GM12878 (cell line): ENCODE measurements at regions of chr6 and their contacts with region 1.

Region 1: GRCh38 chr6:137707590-137708360 is 159.3 kb upstream of the TNFAIP3 start:
- DNase-seq: peak; percentile 97
- ATAC-seq: peak; percentile 75
- H3K4me3 ChIP-seq: peak overlapping the region; percentile 49; the same call in 1 of the 2 replicates
- H3K27ac ChIP-seq: peak overlapping the region; percentile 64
- H3K4me1 ChIP-seq: peaks cover 39% of the 10 kb centered on the region
- H3K27me3 ChIP-seq: no peaks in the 10 kb centered on the region
- CTCF ChIP-seq: peak; percentile 67 to 88 (median 83); a peak in 5 of 6 replicates
- EP300 ChIP-seq: peak; percentile 33 to 57; a peak in 2 of 4 replicates
- POLR2A ChIP-seq: no peak
- RAD21 ChIP-seq: peak; percentile 91

Region 2: DNA sequence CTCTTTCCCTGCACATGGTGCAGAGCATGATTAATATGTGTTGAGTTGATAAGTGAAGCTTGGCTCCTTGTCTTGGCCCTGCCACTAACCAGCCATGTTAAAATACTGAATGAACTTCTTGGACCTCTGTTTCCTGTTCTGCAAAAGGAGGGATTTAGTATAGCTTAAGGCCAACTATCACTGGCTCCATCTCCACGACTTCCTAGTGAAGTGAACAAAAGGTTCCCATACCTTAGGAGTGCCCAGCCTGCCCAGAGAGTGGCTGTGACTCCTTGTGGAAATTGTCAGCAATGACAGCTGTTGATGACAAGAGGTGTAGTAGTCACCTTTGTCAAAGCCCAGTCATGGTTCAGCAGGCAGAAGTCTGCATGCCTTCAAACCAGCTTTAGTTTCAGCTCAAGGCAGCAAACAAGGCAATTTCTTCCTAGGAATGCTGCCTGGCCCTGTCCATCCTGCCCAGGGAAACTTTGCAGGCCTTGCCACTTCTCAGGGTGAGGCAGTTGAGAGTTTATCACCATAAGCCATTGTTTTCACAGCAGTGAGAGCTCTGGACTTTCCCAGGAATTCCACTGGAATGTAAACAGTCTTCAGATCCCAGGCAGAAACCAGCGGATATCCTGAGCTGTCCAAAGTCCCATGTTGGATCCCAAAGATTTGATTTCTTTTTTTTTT is 10.4 kb before region 1 on chr6:
- CTCF ChIA-PET with region 1: interaction called, 12 read pairs
- POLR2A ChIA-PET with region 1: no interaction called
- RAD21 ChIA-PET with region 1: interaction called, 7 read pairs
- SMC1A ChIA-PET with region 1: interaction called, 9 read pairs
- in situ Hi-C with region 1: no loop called
- intact Hi-C with region 1: no loop called
- DNase-seq: no peak
- ATAC-seq: peak; percentile 80
- H3K4me3 ChIP-seq: no peak overlapping the region
- H3K27ac ChIP-seq: no peak overlapping the region
- H3K4me1 ChIP-seq: peaks cover 13% of the 10 kb centered on the region
- H3K27me3 ChIP-seq: no peaks in the 10 kb centered on the region
- CTCF ChIP-seq: peak; percentile 14 to 35 (median 27); a peak in 5 of 6 replicates
- EP300 ChIP-seq: no peak
- POLR2A ChIP-seq: no peak
- RAD21 ChIP-seq: peak; percentile 58

Region 3: GRCh38 chr6:137761103-137761886 is 53.5 kb after region 1 on chr6:
- CTCF ChIA-PET with region 1: interaction called, 4 read pairs
- POLR2A ChIA-PET with region 1: interaction called, 3 read pairs
- RAD21 ChIA-PET with region 1: interaction called, 3 read pairs
- SMC1A ChIA-PET with region 1: interaction called, 10 read pairs
- in situ Hi-C with region 1: no loop called
- intact Hi-C with region 1: no loop called
- DNase-seq: no peak
- ATAC-seq: no peak
- H3K4me3 ChIP-seq: no peak overlapping the region
- H3K27ac ChIP-seq: no peak overlapping the region
- H3K4me1 ChIP-seq: peaks cover 10% of the 10 kb centered on the region
- H3K27me3 ChIP-seq: no peaks in the 10 kb centered on the region
- CTCF ChIP-seq: no peak
- EP300 ChIP-seq: no peak
- POLR2A ChIP-seq: no peak
- RAD21 ChIP-seq: no peak

Region 4: DNA sequence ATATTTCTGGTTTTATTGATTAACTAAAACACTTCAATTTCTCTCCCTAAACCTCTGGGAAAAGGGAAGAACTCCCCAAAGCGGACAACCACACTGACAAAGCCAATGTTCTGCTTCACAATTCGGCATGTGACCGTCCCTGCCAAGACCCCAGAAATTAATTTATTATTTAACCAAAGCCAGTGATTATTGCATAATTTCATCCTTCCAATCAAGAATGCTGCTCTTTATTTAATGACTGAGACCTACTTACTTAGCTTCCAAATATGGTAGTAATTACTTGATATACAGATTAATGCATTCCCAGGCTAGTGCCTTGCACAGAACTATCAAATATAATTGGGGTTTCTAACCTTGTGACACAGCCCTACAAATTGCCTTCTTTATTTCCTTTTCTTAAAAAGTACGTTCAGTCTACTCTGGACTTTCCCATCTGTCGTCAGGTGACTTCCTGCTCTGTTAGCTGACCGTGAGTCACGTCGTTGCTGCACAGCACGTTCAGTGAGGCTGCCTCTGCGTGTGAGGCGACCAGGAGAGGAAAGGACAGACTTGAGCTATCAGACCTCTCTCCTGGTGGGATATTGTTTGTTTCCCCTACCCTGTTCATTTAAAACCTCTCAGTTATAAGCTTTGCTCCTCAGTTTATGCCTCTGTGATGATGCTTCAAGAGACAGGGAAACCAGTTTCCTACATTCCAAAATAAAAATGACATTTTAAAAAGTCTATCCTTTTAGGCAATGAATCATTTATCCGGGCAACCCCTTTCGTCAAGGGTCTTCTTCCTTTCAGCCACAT is 103.5 kb after region 1 on chr6:
- CTCF ChIA-PET with region 1: interaction called, 7 read pairs
- POLR2A ChIA-PET with region 1: interaction called, 4 read pairs
- RAD21 ChIA-PET with region 1: interaction called, 14 read pairs
- SMC1A ChIA-PET with region 1: interaction called, 15 read pairs
- in situ Hi-C with region 1: no loop called
- intact Hi-C with region 1: no loop called
- DNase-seq: peak; percentile 95
- ATAC-seq: peak; percentile 95
- H3K4me3 ChIP-seq: peak overlapping the region; percentile 20
- H3K27ac ChIP-seq: peak overlapping the region; percentile 89
- H3K4me1 ChIP-seq: peaks cover 31% of the 10 kb centered on the region
- H3K27me3 ChIP-seq: no peaks in the 10 kb centered on the region
- CTCF ChIP-seq: no peak
- EP300 ChIP-seq: peak in 1 of 2 experiments; percentile 72; a peak in 2 of 4 replicates
- POLR2A ChIP-seq: peak; percentile 88
- RAD21 ChIP-seq: no peak

Region 5: DNA sequence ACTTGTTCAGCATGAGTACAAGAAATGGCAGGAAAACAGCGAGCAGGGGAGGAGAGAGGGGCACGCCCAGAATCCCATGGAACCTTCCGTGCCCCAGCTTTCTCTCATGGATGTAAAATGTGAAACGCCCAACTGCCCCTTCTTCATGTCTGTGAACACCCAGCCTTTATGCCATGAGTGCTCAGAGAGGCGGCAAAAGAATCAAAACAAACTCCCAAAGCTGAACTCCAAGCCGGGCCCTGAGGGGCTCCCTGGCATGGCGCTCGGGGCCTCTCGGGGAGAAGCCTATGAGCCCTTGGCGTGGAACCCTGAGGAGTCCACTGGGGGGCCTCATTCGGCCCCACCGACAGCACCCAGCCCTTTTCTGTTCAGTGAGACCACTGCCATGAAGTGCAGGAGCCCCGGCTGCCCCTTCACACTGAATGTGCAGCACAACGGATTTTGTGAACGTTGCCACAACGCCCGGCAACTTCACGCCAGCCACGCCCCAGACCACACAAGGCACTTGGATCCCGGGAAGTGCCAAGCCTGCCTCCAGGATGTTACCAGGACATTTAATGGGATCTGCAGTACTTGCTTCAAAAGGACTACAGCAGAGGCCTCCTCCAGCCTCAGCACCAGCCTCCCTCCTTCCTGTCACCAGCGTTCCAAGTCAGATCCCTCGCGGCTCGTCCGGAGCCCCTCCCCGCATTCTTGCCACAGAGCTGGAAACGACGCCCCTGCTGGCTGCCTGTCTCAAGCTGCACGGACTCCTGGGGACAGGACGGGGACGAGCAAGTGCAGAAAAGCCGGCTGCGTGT is 170.9 kb after region 1 on chr6:
- CTCF ChIA-PET with region 1: interaction called, 55 read pairs
- POLR2A ChIA-PET with region 1: interaction called, 3 read pairs
- RAD21 ChIA-PET with region 1: interaction called, 38 read pairs
- SMC1A ChIA-PET with region 1: interaction called, 117 read pairs
- in situ Hi-C with region 1: no loop called
- intact Hi-C with region 1: no loop called
- DNase-seq: no peak
- ATAC-seq: peak; percentile 4; the same call in 2 of the 3 replicates
- H3K4me3 ChIP-seq: peak overlapping the region; percentile 56; the same call in 1 of the 2 replicates
- H3K27ac ChIP-seq: peak overlapping the region; percentile 9; the same call in 1 of the 2 replicates
- H3K4me1 ChIP-seq: peaks cover 10% of the 10 kb centered on the region; the same call in 1 of the 2 replicates
- H3K27me3 ChIP-seq: no peaks in the 10 kb centered on the region
- CTCF ChIP-seq: no peak; a peak in 2 of 6 replicates
- EP300 ChIP-seq: no peak
- POLR2A ChIP-seq: peak; percentile 53; the same call in 1 of the 2 replicates
- RAD21 ChIP-seq: no peak

Region 6: DNA sequence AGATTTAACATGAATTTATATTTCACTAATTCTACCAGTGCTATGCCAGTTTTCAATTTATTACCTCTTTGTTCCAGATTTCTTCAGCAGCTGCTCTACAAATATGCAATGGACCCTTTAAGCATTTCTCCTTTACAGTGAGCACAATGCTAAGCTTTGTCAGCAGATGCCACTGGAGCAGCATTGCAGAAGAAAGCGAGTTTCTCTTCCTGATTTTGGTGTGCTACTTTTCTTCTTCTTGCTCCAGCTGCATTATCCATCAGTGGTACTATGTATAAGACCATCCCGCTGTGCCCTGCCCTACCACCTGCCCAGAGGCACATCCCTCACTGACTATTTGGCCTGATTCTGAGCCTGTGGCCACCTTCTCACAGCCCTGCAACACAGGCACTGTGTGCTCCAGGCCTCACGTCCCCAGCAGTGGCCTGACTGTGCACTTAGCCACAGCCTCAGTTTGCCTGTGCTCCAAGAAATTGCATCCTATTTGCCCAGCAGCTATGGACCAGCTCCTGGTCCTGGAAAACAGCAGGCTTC is 243.4 kb after region 1 on chr6:
- CTCF ChIA-PET with region 1: interaction called, 174 read pairs
- POLR2A ChIA-PET with region 1: no interaction called
- RAD21 ChIA-PET with region 1: interaction called, 127 read pairs
- SMC1A ChIA-PET with region 1: interaction called, 84 read pairs
- in situ Hi-C with region 1: no loop called
- intact Hi-C with region 1: no loop called
- DNase-seq: no peak
- ATAC-seq: peak; percentile 82
- H3K4me3 ChIP-seq: no peak overlapping the region
- H3K27ac ChIP-seq: no peak overlapping the region
- H3K4me1 ChIP-seq: peaks cover 27% of the 10 kb centered on the region
- H3K27me3 ChIP-seq: no peaks in the 10 kb centered on the region
- CTCF ChIP-seq: peak in 2 of 3 experiments; percentile 59 to 62; a peak in 4 of 6 replicates
- EP300 ChIP-seq: peak in 1 of 2 experiments; percentile 19; a peak in 1 of 4 replicates
- POLR2A ChIP-seq: no peak
- RAD21 ChIP-seq: peak; percentile 89

Region 7: DNA sequence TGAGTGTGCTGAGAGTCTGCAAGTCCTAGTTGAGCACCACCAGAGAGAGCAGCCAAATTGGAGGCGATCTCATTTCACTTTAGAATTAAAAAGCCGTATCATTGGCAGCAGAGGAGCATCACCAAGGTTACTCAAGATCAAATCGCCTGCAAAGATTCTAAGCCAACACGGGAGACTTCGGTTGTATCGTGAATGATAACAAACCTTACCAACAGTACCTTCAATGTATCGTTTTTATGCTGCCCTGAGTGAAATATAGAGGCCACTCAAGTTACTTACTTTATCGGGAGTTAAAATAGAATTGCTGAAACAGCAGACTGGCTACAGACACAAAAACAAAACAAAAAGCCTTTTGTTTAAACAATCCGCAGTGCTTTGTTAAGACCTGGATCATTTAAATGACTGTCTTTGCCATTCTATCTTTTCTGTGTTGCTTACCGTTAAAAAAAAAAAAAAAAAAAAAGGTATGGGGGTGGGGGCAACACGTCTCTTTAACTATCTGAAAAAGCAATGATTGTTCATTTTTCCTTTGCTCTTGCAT is 777.3 kb after region 1 on chr6:
- CTCF ChIA-PET with region 1: no interaction called
- POLR2A ChIA-PET with region 1: no interaction called
- RAD21 ChIA-PET with region 1: no interaction called
- SMC1A ChIA-PET with region 1: no interaction called
- in situ Hi-C with region 1: no loop called
- intact Hi-C with region 1: no loop called
- DNase-seq: no peak
- ATAC-seq: no peak
- H3K4me3 ChIP-seq: no peak overlapping the region
- H3K27ac ChIP-seq: no peak overlapping the region
- H3K4me1 ChIP-seq: no peaks in the 10 kb centered on the region
- H3K27me3 ChIP-seq: no peaks in the 10 kb centered on the region; a peak in 1 of 4 replicates
- CTCF ChIP-seq: no peak
- EP300 ChIP-seq: no peak
- POLR2A ChIP-seq: no peak
- RAD21 ChIP-seq: no peak